ENCODE measurements at regions of chr9 and their contacts with region 1.

Region 1: GRCh38 chr9:129110740-129111527 is at the starts of genes CRAT and PTPA:
- DNase-seq: peak; percentile 99
- ATAC-seq: peak; percentile 90
- H3K4me3 Mint-ChIP-seq: peak within 1 kb of the TSS; percentile 93
- H3K27ac Mint-ChIP-seq: peak within 1 kb of the TSS; percentile 94
- H3K4me1 Mint-ChIP-seq: peaks cover 38% of the 10 kb centered on the region
- H3K27me3 Mint-ChIP-seq: no peaks in the 10 kb centered on the region
- total RNA-seq, gene CRAT: 13.2 to 18.9 TPM
- total RNA-seq, gene PTPA: 71.9 to 88.0 TPM

Region 2: DNA sequence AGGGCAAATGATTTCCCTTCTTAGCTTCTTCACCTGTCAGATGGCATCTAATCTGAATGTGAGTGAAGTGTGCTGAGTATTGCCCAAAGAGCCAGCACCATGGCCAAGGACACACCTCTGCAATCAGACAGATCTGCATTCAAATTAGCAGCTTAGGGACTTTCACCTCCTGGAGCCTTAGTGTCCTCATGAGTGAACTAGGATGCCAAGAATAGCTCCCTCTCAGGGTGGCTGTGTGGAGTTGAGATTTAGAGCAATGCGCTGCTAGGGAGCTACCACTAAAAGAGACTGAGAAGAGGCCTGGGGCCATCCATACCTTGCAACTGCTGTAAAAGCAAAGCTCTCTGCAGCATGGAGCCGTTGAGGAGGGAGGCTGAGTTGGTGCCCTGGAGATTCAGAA is 920.9 kb before region 1 on chr9:
- CTCF ChIA-PET with region 1: no interaction called
- POLR2A ChIA-PET with region 1: no interaction called
- intact Hi-C with region 1: no loop called
- DNase-seq: no peak
- ATAC-seq: peak; percentile 13
- H3K4me3 Mint-ChIP-seq: peak overlapping the region; percentile 87
- H3K27ac Mint-ChIP-seq: peak overlapping the region; percentile 5
- H3K4me1 Mint-ChIP-seq: peaks cover 28% of the 10 kb centered on the region
- H3K27me3 Mint-ChIP-seq: no peaks in the 10 kb centered on the region

Region 3: GRCh38 chr9:128688512-128689292 is 422.2 kb before region 1 on chr9 and contains the start of gene SET:
- CTCF ChIA-PET with region 1: no interaction called
- POLR2A ChIA-PET with region 1: no interaction called
- intact Hi-C with region 1: loop called in 1 of 2 experiments (anchors 1 kb)
- DNase-seq: peak; percentile 96
- ATAC-seq: peak; percentile 71
- H3K4me3 Mint-ChIP-seq: peak within 1 kb of the TSS; percentile 99
- H3K27ac Mint-ChIP-seq: peak within 1 kb of the TSS; percentile 94
- H3K4me1 Mint-ChIP-seq: peaks cover 61% of the 10 kb centered on the region
- H3K27me3 Mint-ChIP-seq: no peaks in the 10 kb centered on the region
- total RNA-seq, gene SET: 673 to 682 TPM

Region 4: GRCh38 chr9:128881901-128882681 is 228.8 kb before region 1 on chr9 and contains the starts of genes KYAT1 and LRRC8A:
- CTCF ChIA-PET with region 1: no interaction called
- POLR2A ChIA-PET with region 1: no interaction called
- intact Hi-C with region 1: loop called in 1 of 2 experiments (anchors 1 kb)
- DNase-seq: peak; percentile 99
- ATAC-seq: peak; percentile 95
- H3K4me3 Mint-ChIP-seq: peak within 1 kb of the TSS; percentile 94
- H3K27ac Mint-ChIP-seq: peak within 1 kb of the TSS; percentile 91
- H3K4me1 Mint-ChIP-seq: peaks cover 56% of the 10 kb centered on the region
- H3K27me3 Mint-ChIP-seq: no peaks in the 10 kb centered on the region
- total RNA-seq, gene KYAT1: 14.8 to 18.5 TPM
- total RNA-seq, gene LRRC8A: 14.9 to 15.5 TPM

Region 5: GRCh38 chr9:129073404-129073803 is 37.5 kb before region 1 on chr9:
- CTCF ChIA-PET with region 1: no interaction called
- POLR2A ChIA-PET with region 1: interaction called, 10 read pairs
- intact Hi-C with region 1: no loop called
- DNase-seq: no peak
- ATAC-seq: no peak
- H3K4me3 Mint-ChIP-seq: no peak overlapping the region
- H3K27ac Mint-ChIP-seq: no peak overlapping the region
- H3K4me1 Mint-ChIP-seq: peaks cover 37% of the 10 kb centered on the region
- H3K27me3 Mint-ChIP-seq: no peaks in the 10 kb centered on the region

Region 6: GRCh38 chr9:129258124-129258822 is 147.3 kb after region 1 on chr9:
- CTCF ChIA-PET with region 1: no interaction called
- POLR2A ChIA-PET with region 1: no interaction called
- intact Hi-C with region 1: loop called in 1 of 2 experiments (anchors 1 kb)
- DNase-seq: peak; percentile 96
- ATAC-seq: peak; percentile 96
- H3K4me3 Mint-ChIP-seq: peak overlapping the region; percentile 61
- H3K27ac Mint-ChIP-seq: no peak overlapping the region
- H3K4me1 Mint-ChIP-seq: peaks cover 27% of the 10 kb centered on the region
- H3K27me3 Mint-ChIP-seq: peaks cover 15% of the 10 kb centered on the region

Region 7: GRCh38 chr9:129626079-129626624 is 515.2 kb after region 1 on chr9 and contains the start of gene NTMT1:
- CTCF ChIA-PET with region 1: no interaction called
- POLR2A ChIA-PET with region 1: no interaction called
- intact Hi-C with region 1: loop called in 1 of 2 experiments (anchors 1 kb)
- DNase-seq: peak; percentile 95
- ATAC-seq: peak; percentile 76
- H3K4me3 Mint-ChIP-seq: peak within 1 kb of the TSS; percentile 77
- H3K27ac Mint-ChIP-seq: peak within 1 kb of the TSS; percentile 93
- H3K4me1 Mint-ChIP-seq: peaks cover 52% of the 10 kb centered on the region
- H3K27me3 Mint-ChIP-seq: peaks cover 4% of the 10 kb centered on the region
- total RNA-seq, gene NTMT1: 50.1 to 69.2 TPM

Region 8: GRCh38 chr9:129656795-129657390 is 546.0 kb after region 1 on chr9:
- CTCF ChIA-PET with region 1: no interaction called
- POLR2A ChIA-PET with region 1: no interaction called
- intact Hi-C with region 1: no loop called
- DNase-seq: no peak
- ATAC-seq: peak; percentile 64
- H3K4me3 Mint-ChIP-seq: no peak overlapping the region
- H3K27ac Mint-ChIP-seq: no peak overlapping the region
- H3K4me1 Mint-ChIP-seq: no peaks in the 10 kb centered on the region
- H3K27me3 Mint-ChIP-seq: no peaks in the 10 kb centered on the region